Ovary (tissue), 10 donors: ENCODE measurements at regions of chr1 and their contacts with region 1.

Region 1: DNA sequence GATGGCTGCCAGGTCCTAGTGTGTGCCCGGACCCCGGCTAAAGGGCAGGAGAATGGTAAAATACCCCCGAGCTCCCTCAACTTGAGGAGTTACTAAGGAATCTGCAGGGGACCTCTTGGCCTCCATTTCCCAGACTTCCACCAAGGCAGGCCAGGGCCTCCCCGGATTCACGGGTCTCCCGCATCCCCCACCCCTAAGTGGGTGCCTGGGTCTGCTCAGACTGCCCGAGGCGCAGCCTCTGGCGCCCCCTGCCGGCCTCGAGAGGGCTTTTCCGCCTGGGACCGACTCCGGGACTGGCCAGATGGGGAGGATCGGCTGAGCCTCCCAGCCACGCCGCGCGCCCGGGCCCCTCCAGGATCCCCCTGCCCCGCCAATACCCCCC is 1.7 kb downstream of the PLEKHG5 start:
- DNase-seq: peak; percentile 45 to 75 (median 65)
- H3K4me3 ChIP-seq: peak overlapping the region; percentile 65
- H3K27ac ChIP-seq: no peak overlapping the region
- H3K4me1 ChIP-seq: peaks cover 3% of the 10 kb centered on the region
- H3K27me3 ChIP-seq: no peaks in the 10 kb centered on the region
- CTCF ChIP-seq: peak; percentile 49 to 77 (median 59)
- EP300 ChIP-seq: no peak
- POLR2A ChIP-seq: no peak

Region 2: DNA sequence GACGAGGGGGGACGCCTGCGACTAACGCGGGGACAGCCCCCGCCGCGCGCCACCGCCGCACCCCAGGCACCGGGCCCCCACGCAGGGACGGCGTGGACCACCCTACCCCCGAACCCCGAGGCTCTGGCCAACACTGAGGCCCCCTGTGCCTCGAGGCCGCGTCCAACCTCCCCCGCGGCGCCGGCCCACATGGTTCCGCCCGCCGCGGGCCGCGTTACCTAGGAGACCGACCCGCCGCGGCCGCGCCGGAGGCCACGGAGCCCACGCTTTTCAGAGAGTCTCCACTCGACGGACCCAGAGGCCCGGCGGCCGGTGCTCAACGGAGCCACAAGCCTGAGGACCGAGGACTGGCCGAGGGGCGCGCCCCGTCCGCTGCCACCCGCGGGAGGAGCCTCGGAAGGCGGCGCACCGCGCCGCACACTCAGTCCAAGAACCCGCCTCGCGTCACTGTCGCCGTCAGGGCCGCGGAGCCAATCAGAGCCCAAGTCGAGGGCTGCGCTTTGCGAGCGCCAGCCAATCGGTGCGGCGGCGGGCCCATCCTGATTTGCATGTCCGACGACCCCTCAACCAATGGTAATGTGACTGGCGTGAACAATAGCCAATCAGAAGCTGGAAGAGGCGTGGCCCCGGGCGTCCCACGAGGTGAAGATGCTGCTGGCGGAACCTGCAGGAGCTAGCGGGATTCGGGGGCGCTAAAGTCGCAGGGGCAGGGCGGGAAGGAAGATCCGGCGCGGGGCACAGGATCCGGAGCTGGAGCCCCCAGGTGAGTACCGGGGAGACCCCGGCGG is 497.6 kb before region 1 on chr1 and contains the start of gene NPHP4:
- intact Hi-C with region 1: no loop called
- DNase-seq: peak; percentile 99 to 100 (median 99)
- H3K4me3 ChIP-seq: peak within 1 kb of the TSS; percentile 55
- H3K27ac ChIP-seq: peak within 1 kb of the TSS; percentile 86 to 87
- H3K4me1 ChIP-seq: peaks cover 8% of the 10 kb centered on the region
- H3K27me3 ChIP-seq: no peaks in the 10 kb centered on the region
- CTCF ChIP-seq: peak in 1 of 3 donors; percentile 20
- EP300 ChIP-seq: peak; percentile 15
- POLR2A ChIP-seq: peak; percentile 39
- total RNA-seq, gene NPHP4: 7.9 to 20.8 (median 11.0) TPM

Region 3: GRCh38 chr1:6554031-6554906 is 64.5 kb after region 1 on chr1 and contains the start of gene NOL9:
- intact Hi-C with region 1: loop called in 1 of 4 experiments (anchors 10 kb)
- DNase-seq: peak; percentile 92 to 97 (median 96)
- H3K4me3 ChIP-seq: peak within 1 kb of the TSS; percentile 99
- H3K27ac ChIP-seq: peak within 1 kb of the TSS in 1 of 2 donors; percentile 15
- H3K4me1 ChIP-seq: peaks cover 10% of the 10 kb centered on the region
- H3K27me3 ChIP-seq: no peaks in the 10 kb centered on the region
- CTCF ChIP-seq: peak; percentile 94 to 97 (median 95)
- EP300 ChIP-seq: no peak
- POLR2A ChIP-seq: peak; percentile 36
- total RNA-seq, gene NOL9: 12.6 to 38.9 (median 30.0) TPM

Region 4: DNA sequence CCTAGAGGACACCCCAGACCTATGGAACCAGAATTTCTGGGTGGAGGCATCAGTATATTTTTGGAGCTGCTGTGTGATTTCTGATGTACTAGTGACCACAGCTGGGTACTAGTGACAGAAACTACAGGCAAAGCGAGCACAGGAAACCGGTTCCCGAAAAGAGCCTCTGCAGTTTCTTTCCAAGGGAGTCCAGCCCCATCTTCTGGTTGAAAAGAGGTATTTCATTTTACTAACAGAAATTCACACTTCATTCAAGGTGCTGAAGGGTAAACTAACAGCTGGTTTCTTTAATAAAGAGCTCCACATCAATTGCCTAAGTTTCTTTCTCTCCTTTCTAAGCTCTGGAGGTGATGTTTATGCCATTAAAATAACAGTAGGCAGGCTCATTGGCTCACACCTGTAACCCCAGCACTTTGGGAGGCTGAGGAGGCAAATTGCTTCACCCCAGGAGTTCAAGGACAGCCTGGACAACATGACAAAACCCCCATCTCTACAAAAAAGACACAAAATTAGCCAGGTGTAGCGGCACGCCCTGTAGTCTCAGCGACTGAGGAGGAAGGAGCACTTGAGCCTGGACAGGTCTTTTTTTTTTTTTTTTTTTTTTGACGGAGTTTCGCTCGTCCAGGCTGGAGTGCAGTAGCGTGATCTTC is 156.8 kb after region 1 on chr1:
- intact Hi-C with region 1: loop called (anchors 5 to 10 kb)
- DNase-seq: peak in 1 of 5 donors; percentile 40
- H3K4me3 ChIP-seq: no peak overlapping the region
- H3K27ac ChIP-seq: no peak overlapping the region
- H3K4me1 ChIP-seq: no peaks in the 10 kb centered on the region
- H3K27me3 ChIP-seq: no peaks in the 10 kb centered on the region
- CTCF ChIP-seq: peak; percentile 26 to 68 (median 50)
- EP300 ChIP-seq: no peak
- POLR2A ChIP-seq: no peak

Region 5: GRCh38 chr1:6686294-6686693 is 196.5 kb after region 1 on chr1:
- intact Hi-C with region 1: no loop called
- DNase-seq: no peak
- H3K4me3 ChIP-seq: no peak overlapping the region
- H3K27ac ChIP-seq: no peak overlapping the region
- H3K4me1 ChIP-seq: no peaks in the 10 kb centered on the region
- H3K27me3 ChIP-seq: no peaks in the 10 kb centered on the region
- CTCF ChIP-seq: no peak
- EP300 ChIP-seq: no peak
- POLR2A ChIP-seq: no peak